Activated T-helper 2 cell treated with anti-CD3 and anti-CD28 coated beads, Interferon-gamma antibody, Interleukin-2, Interleukin-4, amounts not matched to agents 10 μg/mL and 5 μg/mL and 100 μg/mL, durations not matched to agents 14 hours and 24 hours and 36 hours (primary cell): ENCODE measurements at regions of chr1 and their contacts with region 1.

Region 1: GRCh38 chr1:113389953-113390834 is at the start of gene MAGI3:
- DNase-seq: peak; percentile 94
- H3K4me3 Mint-ChIP-seq: peak within 1 kb of the TSS; percentile 88
- H3K27ac Mint-ChIP-seq: peak within 1 kb of the TSS; percentile 80
- H3K4me1 Mint-ChIP-seq: peaks cover 26% of the 10 kb centered on the region
- H3K27me3 Mint-ChIP-seq: peaks cover 43% of the 10 kb centered on the region
- total RNA-seq, gene MAGI3: 4.1 and 4.4 TPM in 2 replicates

Region 2: GRCh38 chr1:112715264-112716053 is 674.7 kb before region 1 on chr1 and contains the start of gene PPM1J:
- intact Hi-C with region 1: loop called (anchors 5 kb)
- DNase-seq: peak; percentile 97
- H3K4me3 Mint-ChIP-seq: peak within 1 kb of the TSS; percentile 81
- H3K27ac Mint-ChIP-seq: peak within 1 kb of the TSS; percentile 21
- H3K4me1 Mint-ChIP-seq: peaks cover 24% of the 10 kb centered on the region
- H3K27me3 Mint-ChIP-seq: peaks cover 33% of the 10 kb centered on the region
- total RNA-seq, gene PPM1J: 0.59 and 0.67 TPM in 2 replicates

Region 3: GRCh38 chr1:113353581-113353980 is 36.6 kb before region 1 on chr1:
- intact Hi-C with region 1: no loop called
- DNase-seq: no peak
- H3K4me3 Mint-ChIP-seq: no peak overlapping the region
- H3K27ac Mint-ChIP-seq: no peak overlapping the region
- H3K4me1 Mint-ChIP-seq: no peaks in the 10 kb centered on the region
- H3K27me3 Mint-ChIP-seq: peaks cover 3% of the 10 kb centered on the region

Region 4: GRCh38 chr1:113415310-113416070 is 25.3 kb after region 1 on chr1:
- intact Hi-C with region 1: loop called (anchors 2 kb)
- DNase-seq: no peak
- H3K4me3 Mint-ChIP-seq: no peak overlapping the region
- H3K27ac Mint-ChIP-seq: no peak overlapping the region
- H3K4me1 Mint-ChIP-seq: no peaks in the 10 kb centered on the region
- H3K27me3 Mint-ChIP-seq: no peaks in the 10 kb centered on the region

Region 5: DNA sequence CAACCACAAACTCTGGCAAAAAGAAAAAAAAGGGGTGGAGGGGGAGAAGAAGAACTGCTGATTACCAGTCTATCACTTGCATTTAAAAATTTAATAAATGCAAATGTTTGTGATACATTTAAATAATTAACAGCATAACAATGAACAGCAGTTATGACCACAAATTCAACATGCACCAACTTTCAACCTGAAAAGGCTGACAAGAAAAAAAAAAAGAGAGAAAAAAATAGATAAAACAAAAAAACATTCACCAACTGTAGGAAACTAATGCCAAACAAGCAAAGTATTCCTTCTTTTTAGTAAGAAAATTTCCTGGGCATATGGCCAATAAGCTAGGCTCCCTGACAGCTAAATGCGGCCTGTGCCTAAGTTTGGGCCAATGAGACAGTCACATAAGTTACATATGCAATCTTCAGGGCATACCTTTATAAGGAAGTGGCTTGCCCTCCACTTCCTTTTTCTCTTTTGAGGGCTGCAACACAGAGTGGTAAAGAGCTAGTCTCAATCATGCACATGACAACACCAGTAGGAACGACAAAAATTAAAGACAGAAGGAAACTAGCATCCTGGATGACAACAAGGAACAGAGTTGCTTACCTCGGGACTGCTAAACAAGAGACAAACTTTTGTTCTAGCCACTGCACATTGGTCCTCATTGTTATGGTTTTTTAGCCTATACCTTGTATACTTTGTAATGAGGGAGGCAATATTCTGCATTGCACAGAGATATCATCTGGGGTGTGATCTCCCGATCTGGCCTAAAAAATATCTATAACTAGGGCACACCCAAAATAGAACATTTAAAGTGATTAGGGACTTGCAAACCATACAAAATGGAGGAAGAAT is 393.3 kb after region 1 on chr1:
- intact Hi-C with region 1: loop called (anchors 10 kb)
- DNase-seq: peak; percentile 45
- H3K4me3 Mint-ChIP-seq: peak overlapping the region; percentile 68
- H3K27ac Mint-ChIP-seq: peak overlapping the region; percentile 94
- H3K4me1 Mint-ChIP-seq: peaks cover 34% of the 10 kb centered on the region
- H3K27me3 Mint-ChIP-seq: no peaks in the 10 kb centered on the region